ENCODE measurements at regions of chr3 and their contacts with region 1.

Region 1: DNA sequence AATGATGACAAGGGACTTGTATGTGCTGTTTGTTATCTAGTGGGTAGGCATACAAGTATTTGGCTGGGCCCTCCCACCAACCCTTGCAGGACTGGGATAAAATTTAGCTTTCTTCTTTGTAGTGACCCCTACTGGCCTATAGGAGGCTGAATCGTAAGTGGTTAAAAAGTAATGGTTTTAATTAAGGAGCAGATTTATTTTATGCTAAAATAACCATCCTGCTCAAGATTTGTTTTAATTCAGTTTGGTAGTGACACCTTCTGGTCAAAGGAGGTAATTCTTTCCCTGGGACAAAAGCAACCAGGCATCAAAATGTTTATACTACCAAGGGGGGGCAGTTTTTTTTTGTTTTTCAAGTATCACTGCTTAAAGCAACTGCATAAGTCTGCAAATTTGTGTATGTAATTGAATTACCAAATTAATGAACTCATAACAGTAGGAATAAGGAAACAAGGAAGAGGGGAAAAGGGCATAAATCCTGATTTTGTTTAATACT is 70.7 kb downstream of the TOP2B start:
- DNase-seq: no peak
- ATAC-seq: peak; percentile 75
- H3K4me3 ChIP-seq: no peak overlapping the region
- H3K27ac ChIP-seq: no peak overlapping the region
- H3K4me1 ChIP-seq: no peaks in the 10 kb centered on the region
- H3K27me3 ChIP-seq: no peaks in the 10 kb centered on the region
- CTCF ChIP-seq: peak; percentile 51 to 62 (median 56)
- EP300 ChIP-seq: no peak
- POLR2A ChIP-seq: no peak
- RAD21 ChIP-seq: peak; percentile 59

Region 2: GRCh38 chr3:24680214-24680967 is 913.7 kb before region 1 on chr3:
- CTCF ChIA-PET with region 1: no interaction called
- POLR2A ChIA-PET with region 1: no interaction called
- RAD21 ChIA-PET with region 1: no interaction called
- SMC1A ChIA-PET with region 1: no interaction called
- in situ Hi-C with region 1: no loop called
- intact Hi-C with region 1: loop called (anchors 10 kb)
- DNase-seq: no peak
- ATAC-seq: peak; percentile 95
- H3K4me3 ChIP-seq: no peak overlapping the region
- H3K27ac ChIP-seq: no peak overlapping the region
- H3K4me1 ChIP-seq: no peaks in the 10 kb centered on the region
- H3K27me3 ChIP-seq: no peaks in the 10 kb centered on the region; a peak in 1 of 4 replicates
- CTCF ChIP-seq: peak; percentile 74 to 84 (median 81)
- EP300 ChIP-seq: no peak
- POLR2A ChIP-seq: no peak
- RAD21 ChIP-seq: peak; percentile 53

Region 3: DNA sequence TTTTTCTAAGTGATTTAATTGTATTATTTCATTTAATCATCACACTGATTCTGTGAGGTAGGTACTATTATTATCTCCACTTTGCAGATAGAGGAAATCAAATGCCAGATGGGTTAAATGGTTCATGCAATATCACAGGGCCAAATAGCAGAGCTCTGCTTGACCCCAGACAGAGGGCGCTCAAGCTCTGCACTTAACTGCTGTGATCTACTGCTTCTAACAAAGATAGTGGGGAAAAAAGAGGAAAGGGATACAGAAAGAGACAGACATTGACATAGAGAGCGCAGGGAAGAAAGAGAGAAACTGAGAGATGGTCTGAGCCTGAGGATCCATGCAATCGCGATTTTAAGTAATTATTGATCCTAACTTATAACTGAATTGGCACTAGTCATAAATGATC is 820.3 kb before region 1 on chr3:
- CTCF ChIA-PET with region 1: interaction called, 9 read pairs
- POLR2A ChIA-PET with region 1: no interaction called
- RAD21 ChIA-PET with region 1: interaction called, 4 read pairs
- SMC1A ChIA-PET with region 1: interaction called, 5 read pairs
- in situ Hi-C with region 1: loop called (anchors 10 kb)
- intact Hi-C with region 1: loop called (anchors 5 kb)
- DNase-seq: no peak
- ATAC-seq: peak; percentile 91
- H3K4me3 ChIP-seq: no peak overlapping the region
- H3K27ac ChIP-seq: no peak overlapping the region
- H3K4me1 ChIP-seq: no peaks in the 10 kb centered on the region
- H3K27me3 ChIP-seq: no peaks in the 10 kb centered on the region
- CTCF ChIP-seq: peak; percentile 66 to 75 (median 66)
- EP300 ChIP-seq: no peak
- POLR2A ChIP-seq: no peak
- RAD21 ChIP-seq: peak; percentile 79

Region 4: DNA sequence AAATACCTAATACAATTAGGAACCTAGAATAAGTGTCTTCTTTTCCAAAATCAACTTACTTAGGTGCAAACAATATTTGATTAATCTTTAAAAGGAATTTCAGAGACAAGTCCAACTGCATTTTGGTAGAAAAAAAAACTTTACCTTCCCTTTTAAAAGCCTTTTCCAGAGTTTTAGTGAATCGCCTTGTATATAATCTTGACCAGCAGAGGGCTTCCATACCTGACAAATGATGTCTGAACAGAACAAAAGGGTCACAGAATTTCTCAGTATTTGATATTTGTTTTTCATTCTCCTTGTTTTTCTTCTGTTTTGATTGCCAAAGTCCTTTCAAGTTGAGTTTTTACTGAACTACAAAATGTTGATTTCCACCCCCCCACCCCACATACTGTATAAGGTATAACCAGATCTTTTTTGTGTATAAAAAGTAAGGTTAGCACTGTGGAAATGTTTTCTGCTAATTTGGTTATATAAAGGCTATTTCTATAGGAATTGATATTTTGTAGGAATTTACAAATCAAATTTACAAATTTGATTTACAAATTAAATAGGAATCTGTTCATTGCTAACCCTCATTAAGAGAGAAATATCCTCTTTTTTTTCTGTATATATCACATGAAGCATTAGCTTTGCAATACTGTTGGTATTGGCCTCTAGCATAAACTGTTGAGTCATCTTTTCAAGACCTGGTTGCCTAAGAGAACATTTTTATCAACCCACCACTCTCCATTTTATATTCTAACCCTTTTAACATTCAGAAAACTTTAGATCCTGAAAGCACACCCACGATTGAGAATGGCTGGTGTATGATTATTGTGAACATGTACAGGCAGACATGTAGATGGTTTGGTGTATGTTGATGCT is 630.1 kb before region 1 on chr3:
- CTCF ChIA-PET with region 1: interaction called, 3 read pairs
- POLR2A ChIA-PET with region 1: no interaction called
- RAD21 ChIA-PET with region 1: no interaction called
- SMC1A ChIA-PET with region 1: no interaction called
- in situ Hi-C with region 1: no loop called
- intact Hi-C with region 1: loop called (anchors 2 kb)
- DNase-seq: no peak
- ATAC-seq: peak; percentile 54; the same call in 2 of the 3 replicates
- H3K4me3 ChIP-seq: no peak overlapping the region
- H3K27ac ChIP-seq: no peak overlapping the region
- H3K4me1 ChIP-seq: no peaks in the 10 kb centered on the region
- H3K27me3 ChIP-seq: no peaks in the 10 kb centered on the region
- CTCF ChIP-seq: peak; percentile 30 to 44 (median 33); a peak in 5 of 6 replicates
- EP300 ChIP-seq: no peak
- POLR2A ChIP-seq: no peak
- RAD21 ChIP-seq: peak; percentile 57

Region 5: DNA sequence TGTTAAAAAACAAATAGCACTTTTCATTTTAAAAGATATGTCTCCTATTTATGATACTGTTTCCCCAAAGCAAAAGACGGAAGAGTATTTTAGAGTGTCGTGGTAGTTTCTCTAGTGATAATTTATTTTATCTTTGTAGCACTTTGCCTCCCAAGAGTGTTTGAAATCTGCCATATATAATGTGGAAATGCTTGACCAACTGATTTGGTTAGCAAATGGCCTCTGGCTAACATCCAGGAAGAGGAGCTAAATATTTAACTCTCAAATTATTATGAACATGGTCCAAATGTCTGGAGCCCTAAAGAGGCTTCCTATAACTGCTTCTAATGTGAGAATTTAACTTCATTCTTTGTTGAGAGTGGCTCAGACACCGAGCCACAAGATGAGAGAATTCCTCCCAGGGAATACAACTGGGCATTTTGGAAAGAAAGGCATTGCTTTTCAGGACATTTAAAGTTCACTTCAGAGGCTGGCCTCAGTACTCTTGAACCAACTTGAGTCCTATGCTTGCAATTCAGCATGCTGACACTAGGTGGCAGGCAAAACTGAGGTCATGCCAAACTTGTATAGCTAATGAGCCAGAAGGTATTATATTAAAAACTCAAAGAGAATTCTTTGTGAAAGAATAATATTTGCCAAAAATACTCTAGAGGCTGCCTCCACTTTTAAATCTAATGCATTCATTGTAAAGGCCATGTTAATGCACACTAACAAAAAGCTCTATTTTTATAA is 61.5 kb before region 1 on chr3:
- CTCF ChIA-PET with region 1: interaction called, 11 read pairs
- POLR2A ChIA-PET with region 1: interaction called, 7 read pairs
- RAD21 ChIA-PET with region 1: no interaction called
- SMC1A ChIA-PET with region 1: no interaction called
- in situ Hi-C with region 1: no loop called
- intact Hi-C with region 1: no loop called
- DNase-seq: no peak
- ATAC-seq: 0 out of 3 replicates have a peak, but pooled peaks have one; percentile 34
- H3K4me3 ChIP-seq: no peak overlapping the region
- H3K27ac ChIP-seq: no peak overlapping the region
- H3K4me1 ChIP-seq: no peaks in the 10 kb centered on the region
- H3K27me3 ChIP-seq: no peaks in the 10 kb centered on the region; a peak in 1 of 4 replicates
- CTCF ChIP-seq: peak; percentile 22 to 67 (median 55); a peak in 5 of 6 replicates
- EP300 ChIP-seq: no peak
- POLR2A ChIP-seq: no peak
- RAD21 ChIP-seq: peak; percentile 35; the same call in 1 of the 2 replicates

Region 6: DNA sequence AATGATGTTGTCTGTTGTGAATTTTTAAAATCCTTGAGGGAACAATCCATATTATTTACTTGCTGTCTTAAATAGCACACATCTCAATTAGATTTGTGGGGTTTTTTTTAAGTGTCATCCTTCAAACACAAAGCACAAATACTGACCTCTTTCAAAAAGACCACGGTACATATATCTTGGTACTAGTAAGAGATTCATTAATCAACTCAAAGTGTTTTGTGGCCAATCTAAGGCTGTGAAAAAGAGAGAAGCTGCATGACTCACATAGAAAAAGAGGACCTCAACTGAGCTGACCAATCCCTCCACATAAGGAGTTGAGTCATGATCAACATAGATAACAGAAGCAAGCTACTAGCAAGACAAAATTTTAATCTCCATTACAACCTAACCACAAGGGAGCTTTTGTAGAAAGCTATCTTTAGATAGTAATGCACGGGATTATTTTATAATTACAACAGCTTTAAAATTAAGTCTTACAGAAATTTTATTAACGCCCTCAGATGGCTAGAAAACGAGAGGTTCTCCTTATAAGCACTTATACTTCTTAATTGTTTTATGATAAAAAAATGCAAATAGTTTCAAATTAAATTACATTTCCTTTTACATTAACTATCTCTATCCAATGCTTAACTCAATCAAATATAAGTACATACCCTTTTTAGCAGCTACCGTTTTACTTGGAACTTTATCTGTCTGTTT is 10.2 kb after region 1 on chr3:
- CTCF ChIA-PET with region 1: interaction called, 10 read pairs
- POLR2A ChIA-PET with region 1: no interaction called
- RAD21 ChIA-PET with region 1: no interaction called
- SMC1A ChIA-PET with region 1: interaction called, 4 read pairs
- in situ Hi-C with region 1: no loop called
- intact Hi-C with region 1: no loop called
- DNase-seq: no peak
- ATAC-seq: peak; percentile 54
- H3K4me3 ChIP-seq: no peak overlapping the region
- H3K27ac ChIP-seq: no peak overlapping the region
- H3K4me1 ChIP-seq: no peaks in the 10 kb centered on the region
- H3K27me3 ChIP-seq: no peaks in the 10 kb centered on the region
- CTCF ChIP-seq: no peak
- EP300 ChIP-seq: no peak
- POLR2A ChIP-seq: no peak
- RAD21 ChIP-seq: no peak